K562 (cell line): ENCODE measurements at regions of chr6 and their contacts with region 1.

Region 1: GRCh38 chr6:89154126-89154525 is 8.3 kb downstream of the PM20D2 start:
- DNase-seq: no peak
- ATAC-seq: no peak
- H3K4me3 ChIP-seq: no peak overlapping the region
- H3K27ac ChIP-seq: no peak overlapping the region
- H3K4me1 ChIP-seq: no peaks in the 10 kb centered on the region
- H3K27me3 ChIP-seq: peaks cover 0 to 2% of the 10 kb centered on the region in 2 experiments; a peak in 1 of 5 replicates
- CTCF ChIP-seq: no peak
- EP300 ChIP-seq: no peak
- POLR2A ChIP-seq: no peak
- RAD21 ChIP-seq: no peak

Region 2: DNA sequence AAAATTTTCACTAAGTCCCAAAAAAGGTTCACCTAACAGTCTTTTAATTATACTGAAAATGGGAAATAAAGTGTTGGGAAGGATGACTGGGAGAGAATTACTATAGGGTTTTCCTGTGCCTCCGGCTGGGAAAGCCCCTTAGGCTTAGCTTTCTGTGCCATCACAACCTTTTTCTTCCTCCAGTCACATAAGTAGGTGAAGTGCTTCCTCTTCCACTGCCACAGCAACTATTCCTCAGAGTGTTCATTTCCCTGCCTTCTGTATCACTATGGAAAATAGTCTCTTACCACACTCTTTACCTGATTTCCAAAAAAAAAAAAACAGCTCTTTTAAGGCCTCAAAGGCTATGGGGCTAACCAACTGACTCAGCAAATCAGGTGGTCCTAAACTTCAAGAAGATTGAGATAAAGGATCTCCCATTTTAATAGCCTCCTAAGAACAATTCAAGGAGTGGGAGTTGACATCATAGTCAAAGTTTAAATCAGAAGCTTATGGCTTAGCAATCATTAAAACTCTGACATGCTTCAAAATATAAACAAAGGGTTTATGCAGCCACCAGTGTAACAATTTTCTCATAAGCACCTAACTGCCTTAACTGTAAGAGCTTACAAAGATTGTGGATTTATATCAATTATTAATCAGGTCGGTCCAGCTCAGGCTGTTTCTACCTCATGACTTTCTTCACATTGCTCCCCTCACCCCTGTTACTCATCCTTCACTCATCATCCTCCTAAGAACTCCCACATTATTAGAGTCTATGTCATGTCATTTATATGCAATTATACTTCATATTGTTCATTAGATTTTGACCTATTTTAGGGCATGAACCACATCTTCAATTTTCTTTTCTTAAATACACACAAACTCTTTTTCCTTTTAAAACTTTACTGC is 286.0 kb before region 1 on chr6:
- CTCF ChIA-PET with region 1: no interaction called
- POLR2A ChIA-PET with region 1: no interaction called
- in situ Hi-C with region 1: no loop called
- intact Hi-C with region 1: no loop called
- DNase-seq: no peak
- ATAC-seq: no peak
- H3K4me3 ChIP-seq: no peak overlapping the region
- H3K27ac ChIP-seq: no peak overlapping the region
- H3K4me1 ChIP-seq: peaks cover 0 to 9% of the 10 kb centered on the region in 2 experiments; a peak in 2 of 5 replicates
- H3K27me3 ChIP-seq: no peaks in the 10 kb centered on the region
- CTCF ChIP-seq: no peak
- EP300 ChIP-seq: no peak
- POLR2A ChIP-seq: no peak
- RAD21 ChIP-seq: no peak

Region 3: GRCh38 chr6:90168693-90169131 is 1014.6 kb after region 1 on chr6:
- CTCF ChIA-PET with region 1: no interaction called
- POLR2A ChIA-PET with region 1: no interaction called
- in situ Hi-C with region 1: loop called (anchors 10 kb)
- intact Hi-C with region 1: no loop called
- DNase-seq: no peak
- ATAC-seq: no peak
- H3K4me3 ChIP-seq: no peak overlapping the region
- H3K27ac ChIP-seq: no peak overlapping the region
- H3K4me1 ChIP-seq: no peaks in the 10 kb centered on the region
- H3K27me3 ChIP-seq: no peaks in the 10 kb centered on the region
- CTCF ChIP-seq: no peak
- EP300 ChIP-seq: no peak
- POLR2A ChIP-seq: no peak
- RAD21 ChIP-seq: no peak